ENCODE measurements at regions of chr7 and their contacts with region 1.

Region 1: GRCh38 chr7:131688738-131689661 is 132.6 kb upstream of the PODXL start:
- DNase-seq: peak; percentile 78 to 85
- H3K4me3 ChIP-seq: no peak overlapping the region
- H3K4me3 Mint-ChIP-seq: no peak overlapping the region
- H3K27ac Mint-ChIP-seq: no peak overlapping the region
- H3K4me1 ChIP-seq: no peaks in the 10 kb centered on the region
- H3K4me1 Mint-ChIP-seq: no peaks in the 10 kb centered on the region
- H3K27me3 ChIP-seq: no peaks in the 10 kb centered on the region
- H3K27me3 Mint-ChIP-seq: no peaks in the 10 kb centered on the region
- CTCF ChIP-seq: peak; percentile 95 to 97

Region 2: GRCh38 chr7:129918922-129919321 is 1770.1 kb before region 1 on chr7:
- CTCF ChIA-PET with region 1: interaction called, 10 read pairs
- POLR2A ChIA-PET with region 1: no interaction called
- intact Hi-C with region 1: no loop called
- DNase-seq: no peak
- H3K4me3 ChIP-seq: no peak overlapping the region
- H3K4me3 Mint-ChIP-seq: no peak overlapping the region
- H3K27ac Mint-ChIP-seq: no peak overlapping the region
- H3K4me1 ChIP-seq: no peaks in the 10 kb centered on the region
- H3K4me1 Mint-ChIP-seq: no peaks in the 10 kb centered on the region
- H3K27me3 ChIP-seq: no peaks in the 10 kb centered on the region
- H3K27me3 Mint-ChIP-seq: no peaks in the 10 kb centered on the region
- CTCF ChIP-seq: no peak

Region 3: GRCh38 chr7:131586253-131586652 is 102.7 kb before region 1 on chr7:
- CTCF ChIA-PET with region 1: no interaction called
- POLR2A ChIA-PET with region 1: no interaction called
- intact Hi-C with region 1: no loop called
- DNase-seq: peak; percentile 96 to 99
- H3K4me3 ChIP-seq: no peak overlapping the region
- H3K4me3 Mint-ChIP-seq: no peak overlapping the region
- H3K27ac Mint-ChIP-seq: no peak overlapping the region
- H3K4me1 ChIP-seq: peaks cover 48% of the 10 kb centered on the region
- H3K4me1 Mint-ChIP-seq: peaks cover 7% of the 10 kb centered on the region
- H3K27me3 ChIP-seq: no peaks in the 10 kb centered on the region
- H3K27me3 Mint-ChIP-seq: no peaks in the 10 kb centered on the region
- CTCF ChIP-seq: no peak

Region 4: GRCh38 chr7:131836733-131837132 is 147.7 kb after region 1 on chr7:
- CTCF ChIA-PET with region 1: no interaction called
- POLR2A ChIA-PET with region 1: no interaction called
- intact Hi-C with region 1: loop called (anchors 5 kb)
- DNase-seq: no peak
- H3K4me3 ChIP-seq: no peak overlapping the region
- H3K4me3 Mint-ChIP-seq: no peak overlapping the region
- H3K27ac Mint-ChIP-seq: no peak overlapping the region
- H3K4me1 ChIP-seq: no peaks in the 10 kb centered on the region
- H3K4me1 Mint-ChIP-seq: no peaks in the 10 kb centered on the region
- H3K27me3 ChIP-seq: no peaks in the 10 kb centered on the region
- H3K27me3 Mint-ChIP-seq: peaks cover 8% of the 10 kb centered on the region
- CTCF ChIP-seq: peak in 1 of 2 experiments; percentile 10

Region 5: DNA sequence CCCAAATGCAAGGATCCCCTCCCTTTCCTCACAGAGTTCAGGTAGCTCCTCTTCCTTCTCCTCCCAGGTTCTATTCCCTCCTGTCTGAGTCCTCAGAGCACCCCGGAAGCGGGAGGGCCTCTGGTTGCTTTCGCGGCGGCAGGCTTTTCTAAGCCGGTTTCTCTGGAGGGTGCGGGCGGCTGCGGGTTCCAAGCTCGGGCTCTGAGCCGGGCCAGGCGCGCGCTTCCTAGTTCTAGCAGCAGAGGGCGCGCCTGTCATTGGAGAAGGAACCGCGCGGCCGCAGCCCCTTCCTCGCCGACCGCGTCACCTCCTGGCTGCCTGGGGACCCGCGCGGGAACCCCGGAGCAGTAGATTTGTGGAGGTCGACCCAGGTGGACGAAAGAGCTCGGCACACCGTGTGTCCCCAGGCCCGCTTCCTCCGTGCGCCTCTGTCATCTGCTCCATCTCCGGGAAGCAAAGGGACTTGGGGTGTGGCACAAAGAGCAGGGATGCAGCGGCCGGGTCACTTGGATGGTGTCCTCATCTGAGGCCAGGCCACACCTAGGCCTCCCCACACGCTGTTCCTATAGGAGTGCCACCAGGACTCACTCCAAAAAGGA is 256.4 kb after region 1 on chr7:
- CTCF ChIA-PET with region 1: interaction called, 4 read pairs
- POLR2A ChIA-PET with region 1: no interaction called
- intact Hi-C with region 1: loop called (anchors 5 kb)
- DNase-seq: peak; percentile 53 to 74
- H3K4me3 ChIP-seq: no peak overlapping the region
- H3K4me3 Mint-ChIP-seq: no peak overlapping the region
- H3K27ac Mint-ChIP-seq: no peak overlapping the region
- H3K4me1 ChIP-seq: peaks cover 13% of the 10 kb centered on the region
- H3K4me1 Mint-ChIP-seq: peaks cover 6% of the 10 kb centered on the region
- H3K27me3 ChIP-seq: no peaks in the 10 kb centered on the region; the same call in none of the 2 replicates
- H3K27me3 Mint-ChIP-seq: peaks cover 32% of the 10 kb centered on the region
- CTCF ChIP-seq: peak; percentile 94

Region 6: GRCh38 chr7:132249614-132249972 is 560.6 kb after region 1 on chr7:
- CTCF ChIA-PET with region 1: no interaction called
- POLR2A ChIA-PET with region 1: no interaction called
- intact Hi-C with region 1: loop called (anchors 1 kb)
- DNase-seq: peak in 1 of 2 experiments; percentile 44
- H3K4me3 ChIP-seq: no peak overlapping the region
- H3K4me3 Mint-ChIP-seq: no peak overlapping the region
- H3K27ac Mint-ChIP-seq: no peak overlapping the region
- H3K4me1 ChIP-seq: peaks cover 5% of the 10 kb centered on the region; the same call in 1 of the 2 replicates
- H3K4me1 Mint-ChIP-seq: peaks cover 8% of the 10 kb centered on the region
- H3K27me3 ChIP-seq: no peaks in the 10 kb centered on the region
- H3K27me3 Mint-ChIP-seq: no peaks in the 10 kb centered on the region
- CTCF ChIP-seq: peak; percentile 25 to 44

Measured in Caco-2 (cell line).